ENCODE measurements at regions of chr11 and their contacts with region 1.

Region 1: GRCh38 chr11:117098269-117099232 is at the start of gene SIK3:
- DNase-seq: peak; percentile 90 to 94 (median 91)
- ATAC-seq: peak; percentile 89
- H3K4me3 ChIP-seq: peak within 1 kb of the TSS; percentile 68
- H3K4me3 Mint-ChIP-seq: peak within 1 kb of the TSS; percentile 91 to 97 (median 95)
- H3K27ac ChIP-seq: peak within 1 kb of the TSS; percentile 99
- H3K27ac Mint-ChIP-seq: peak within 1 kb of the TSS; percentile 95 to 100 (median 98)
- H3K4me1 ChIP-seq: peaks cover 27 to 29% of the 10 kb centered on the region in 2 donors
- H3K4me1 Mint-ChIP-seq: peaks cover 30 to 59% (median 50%) of the 10 kb centered on the region in 7 donors
- H3K27me3 ChIP-seq: no peaks in the 10 kb centered on the region
- H3K27me3 Mint-ChIP-seq: peaks cover 0 to 3% (median 0%) of the 10 kb centered on the region in 5 donors
- total RNA-seq, gene SIK3: 34.4 to 85.2 (median 67.0) TPM

Region 2: DNA sequence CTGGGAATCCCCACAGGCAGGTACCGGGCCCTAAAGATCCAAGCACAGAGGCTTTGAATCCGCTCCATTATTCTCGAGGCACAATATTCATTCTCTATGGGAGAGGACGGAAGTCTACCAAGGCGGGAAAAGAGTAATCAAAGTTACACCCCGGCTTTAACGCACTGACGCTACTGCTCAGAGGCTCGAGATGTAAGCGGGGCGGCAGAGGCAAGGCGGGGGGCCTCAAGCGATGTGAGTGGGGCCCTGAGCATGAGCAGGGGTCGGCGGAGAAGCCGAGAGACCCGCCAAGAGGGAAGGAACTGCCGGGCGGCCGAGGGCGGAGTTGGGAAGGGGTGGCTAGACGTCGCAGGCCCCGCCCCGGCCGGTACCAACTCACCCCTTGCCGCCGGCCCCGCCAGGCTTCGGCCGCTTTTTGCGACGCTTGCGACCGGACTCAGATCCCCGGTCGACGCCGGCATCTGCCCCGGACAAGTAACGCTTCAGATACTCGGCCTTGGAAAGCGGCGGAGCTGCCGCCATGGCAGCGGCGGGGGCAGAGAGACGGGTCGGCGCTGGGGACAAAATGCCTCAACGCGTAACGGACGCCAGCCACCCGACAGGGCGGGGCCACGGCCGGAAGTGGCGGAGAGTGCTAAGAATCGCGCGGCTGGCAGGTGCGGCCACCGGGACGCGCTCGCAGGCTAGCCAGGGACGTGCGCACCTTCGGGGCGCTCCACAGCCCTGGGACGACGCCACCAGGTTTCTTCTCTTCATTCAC is 325.9 kb before region 1 on chr11 and contains the start of gene BUD13:
- CTCF ChIA-PET with region 1: no interaction called
- POLR2A ChIA-PET with region 1: interaction called, 6 read pairs
- intact Hi-C with region 1: loop called (anchors 1 to 2 kb)
- DNase-seq: peak; percentile 89 to 98 (median 93)
- ATAC-seq: peak; percentile 97
- H3K4me3 ChIP-seq: peak within 1 kb of the TSS; percentile 94
- H3K4me3 Mint-ChIP-seq: peak within 1 kb of the TSS; percentile 86 to 99 (median 96)
- H3K27ac ChIP-seq: peak within 1 kb of the TSS; percentile 93
- H3K27ac Mint-ChIP-seq: peak within 1 kb of the TSS; percentile 92 to 99 (median 97)
- H3K4me1 ChIP-seq: peaks cover 19 to 20% of the 10 kb centered on the region in 2 donors
- H3K4me1 Mint-ChIP-seq: peaks cover 25 to 53% (median 44%) of the 10 kb centered on the region in 7 donors
- H3K27me3 ChIP-seq: no peaks in the 10 kb centered on the region
- H3K27me3 Mint-ChIP-seq: no peaks in the 10 kb centered on the region
- total RNA-seq, gene BUD13: 10.3 to 32.0 (median 20.3) TPM

Region 3: DNA sequence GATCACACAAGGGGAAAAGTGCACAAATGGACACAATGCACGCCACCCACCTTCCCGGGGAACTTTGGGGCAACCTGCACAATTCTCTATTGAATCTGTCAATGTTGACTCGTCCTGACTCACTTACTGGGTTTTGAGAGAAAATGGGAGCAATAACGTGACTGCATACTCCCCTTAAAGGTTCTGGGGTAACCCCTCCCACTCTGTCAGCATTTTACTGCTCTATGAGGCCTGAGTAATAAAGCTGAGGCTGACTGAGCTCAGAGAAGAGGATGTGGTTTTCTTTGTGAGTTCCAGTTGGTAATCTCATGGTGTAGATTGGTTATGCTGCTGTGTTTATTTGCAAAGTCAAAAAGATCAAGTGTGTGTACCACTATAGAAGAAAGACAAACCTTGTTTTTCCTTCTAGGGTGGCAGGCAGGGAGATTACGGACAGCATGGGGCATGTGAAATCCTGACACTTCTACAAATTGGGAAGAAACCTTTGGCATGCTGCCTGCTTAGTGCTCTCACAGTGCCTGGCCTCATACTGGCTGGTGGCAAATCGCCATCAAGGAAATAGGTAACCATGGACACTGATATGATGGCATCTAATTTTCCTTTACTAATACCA is 245.0 kb before region 1 on chr11:
- CTCF ChIA-PET with region 1: interaction called, 4 read pairs
- POLR2A ChIA-PET with region 1: interaction called, 10 read pairs
- intact Hi-C with region 1: loop called (anchors 1 to 2 kb)
- DNase-seq: peak in 8 of 9 donors; percentile 53 to 84 (median 77)
- ATAC-seq: peak; percentile 98
- H3K4me3 ChIP-seq: peak overlapping the region; percentile 38
- H3K4me3 Mint-ChIP-seq: peak overlapping the region; percentile 47 to 84 (median 70)
- H3K27ac ChIP-seq: peak overlapping the region; percentile 4
- H3K27ac Mint-ChIP-seq: peak overlapping the region; percentile 41 to 92 (median 81)
- H3K4me1 ChIP-seq: peaks cover 57 to 70% of the 10 kb centered on the region in 2 donors
- H3K4me1 Mint-ChIP-seq: peaks cover 52 to 78% (median 76%) of the 10 kb centered on the region in 7 donors
- H3K27me3 ChIP-seq: no peaks in the 10 kb centered on the region
- H3K27me3 Mint-ChIP-seq: no peaks in the 10 kb centered on the region

Region 4: DNA sequence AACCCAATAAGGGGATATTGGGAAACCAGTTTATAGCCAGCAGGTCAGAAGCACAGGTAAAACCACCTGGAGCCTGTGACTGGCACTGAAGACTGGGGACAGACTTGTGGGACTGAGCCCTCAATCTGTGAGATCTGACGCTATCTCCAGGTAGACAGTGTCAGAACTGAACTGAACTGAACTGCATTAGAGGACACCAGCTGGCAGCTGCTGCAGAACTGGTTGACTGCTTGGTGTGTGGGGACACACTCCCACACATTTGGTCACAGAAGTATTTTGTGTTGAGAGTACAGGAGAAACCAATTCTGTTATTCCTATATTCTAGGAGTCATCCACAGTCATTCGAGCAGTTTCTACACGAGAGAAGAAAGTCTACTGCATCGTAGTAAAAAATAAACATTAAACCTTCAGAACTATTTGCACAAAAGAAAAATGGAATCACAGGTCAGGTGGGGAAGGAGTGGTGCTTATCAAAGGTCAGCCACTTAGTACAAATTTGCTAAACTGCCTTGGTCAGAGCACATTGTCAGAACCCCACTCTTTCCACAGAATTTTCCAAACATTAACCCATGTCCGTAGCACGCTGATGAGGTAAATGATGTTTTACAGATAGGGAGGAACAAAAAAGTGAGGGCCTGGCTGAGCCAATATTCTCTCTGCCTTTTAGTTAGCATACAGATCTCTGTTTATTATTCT is 77.5 kb before region 1 on chr11:
- CTCF ChIA-PET with region 1: interaction called, 3 read pairs
- POLR2A ChIA-PET with region 1: no interaction called
- intact Hi-C with region 1: loop called in 1 of 2 experiments (anchors 2 kb)
- DNase-seq: no peak
- ATAC-seq: no peak
- H3K4me3 ChIP-seq: no peak overlapping the region
- H3K4me3 Mint-ChIP-seq: peak overlapping the region in 4 of 10 donors; percentile 23 to 52 (median 30)
- H3K27ac ChIP-seq: no peak overlapping the region
- H3K27ac Mint-ChIP-seq: peak overlapping the region in 6 of 9 donors; percentile 4 to 64 (median 34)
- H3K4me1 ChIP-seq: peaks cover 26 to 45% of the 10 kb centered on the region in 2 donors
- H3K4me1 Mint-ChIP-seq: peaks cover 53 to 76% (median 64%) of the 10 kb centered on the region in 7 donors
- H3K27me3 ChIP-seq: no peaks in the 10 kb centered on the region
- H3K27me3 Mint-ChIP-seq: no peaks in the 10 kb centered on the region

Region 5: DNA sequence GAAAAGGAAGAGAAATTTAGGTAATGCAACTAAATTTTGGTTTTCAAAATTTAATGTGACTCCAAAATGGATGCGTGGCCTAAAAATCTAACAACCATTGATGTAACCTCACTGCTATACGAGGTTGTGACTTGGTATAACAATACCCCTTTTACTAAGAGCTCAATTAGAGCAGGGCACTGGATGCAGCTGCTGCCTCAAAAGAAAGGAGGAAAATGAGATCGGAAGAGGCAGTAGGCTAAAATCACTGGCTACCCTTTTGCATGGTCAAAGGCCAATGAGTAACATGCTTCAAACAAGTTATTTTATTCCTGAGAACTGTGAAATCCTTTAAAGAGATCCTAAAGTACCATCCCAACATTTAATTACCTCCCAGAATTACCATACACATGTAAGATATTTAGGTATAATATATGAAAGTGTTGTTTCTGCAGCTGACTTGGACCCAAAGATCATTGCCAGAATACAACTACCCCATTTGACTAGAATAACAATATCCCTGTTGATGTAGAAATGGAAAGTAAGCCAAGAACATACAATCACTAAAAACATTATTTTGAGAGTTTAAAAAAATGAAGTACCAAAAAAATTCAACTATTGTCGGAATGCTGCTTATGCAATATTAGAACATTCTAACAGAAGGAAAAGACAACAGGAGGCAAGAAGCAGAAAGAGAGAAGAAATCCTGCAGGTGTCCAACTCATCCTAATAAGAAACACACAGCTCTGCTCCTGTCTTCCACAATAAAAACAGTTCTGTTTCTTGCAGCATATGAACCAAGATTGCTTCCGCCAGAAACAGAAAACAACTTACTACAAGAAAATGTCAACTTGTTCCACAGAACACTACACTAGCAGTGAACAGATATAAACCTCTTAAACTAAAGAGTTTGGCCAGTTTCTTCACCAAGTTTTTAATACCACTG is 15.3 kb before region 1 on chr11:
- CTCF ChIA-PET with region 1: interaction called, 3 read pairs
- POLR2A ChIA-PET with region 1: interaction called, 3 read pairs
- intact Hi-C with region 1: loop called (anchors 1 to 2 kb)
- DNase-seq: no peak
- ATAC-seq: no peak
- H3K4me3 ChIP-seq: no peak overlapping the region
- H3K4me3 Mint-ChIP-seq: peak overlapping the region in 4 of 10 donors; percentile 0 to 48 (median 31)
- H3K27ac ChIP-seq: no peak overlapping the region
- H3K27ac Mint-ChIP-seq: peak overlapping the region in 2 of 9 donors; percentile 5 to 26
- H3K4me1 ChIP-seq: peaks cover 10 to 36% of the 10 kb centered on the region in 2 donors
- H3K4me1 Mint-ChIP-seq: peaks cover 29 to 82% (median 73%) of the 10 kb centered on the region in 7 donors
- H3K27me3 ChIP-seq: no peaks in the 10 kb centered on the region
- H3K27me3 Mint-ChIP-seq: no peaks in the 10 kb centered on the region

Region 6: GRCh38 chr11:117171404-117172061 is 73.0 kb after region 1 on chr11:
- CTCF ChIA-PET with region 1: no interaction called
- POLR2A ChIA-PET with region 1: no interaction called
- intact Hi-C with region 1: no loop called
- DNase-seq: no peak
- ATAC-seq: no peak
- H3K4me3 ChIP-seq: no peak overlapping the region
- H3K4me3 Mint-ChIP-seq: no peak overlapping the region
- H3K27ac ChIP-seq: no peak overlapping the region
- H3K27ac Mint-ChIP-seq: peak overlapping the region in 8 of 9 donors; percentile 29 to 66 (median 50)
- H3K4me1 ChIP-seq: no peaks in the 10 kb centered on the region
- H3K4me1 Mint-ChIP-seq: peaks cover 0 to 17% (median 5%) of the 10 kb centered on the region in 7 donors
- H3K27me3 ChIP-seq: no peaks in the 10 kb centered on the region
- H3K27me3 Mint-ChIP-seq: no peaks in the 10 kb centered on the region

Region 7: GRCh38 chr11:117327567-117328374 is 229.2 kb after region 1 on chr11 and contains the start of gene CEP164:
- CTCF ChIA-PET with region 1: no interaction called
- POLR2A ChIA-PET with region 1: no interaction called
- intact Hi-C with region 1: loop called (anchors 1 to 2 kb)
- DNase-seq: peak; percentile 76 to 95 (median 93)
- ATAC-seq: peak; percentile 96
- H3K4me3 ChIP-seq: peak within 1 kb of the TSS; percentile 66
- H3K4me3 Mint-ChIP-seq: peak within 1 kb of the TSS in 8 of 10 donors; percentile 26 to 69 (median 44)
- H3K27ac ChIP-seq: peak within 1 kb of the TSS; percentile 79
- H3K27ac Mint-ChIP-seq: peak within 1 kb of the TSS in 4 of 9 donors; percentile 11 to 81 (median 68)
- H3K4me1 ChIP-seq: peaks cover 0 to 10% of the 10 kb centered on the region in 2 donors
- H3K4me1 Mint-ChIP-seq: peaks cover 0 to 19% (median 14%) of the 10 kb centered on the region in 7 donors
- H3K27me3 ChIP-seq: no peaks in the 10 kb centered on the region
- H3K27me3 Mint-ChIP-seq: peaks cover 0 to 4% (median 0%) of the 10 kb centered on the region in 5 donors
- total RNA-seq, gene CEP164: 36.6 to 47.6 (median 36.8) TPM